Posterior cingulate gyrus (tissue), 11 donors: ENCODE measurements at regions of chr18 and their contacts with region 1.

Region 1: GRCh38 chr18:24271381-24272331 is 126.0 kb downstream of the OSBPL1A start:
- DNase-seq: peak; percentile 47 to 95 (median 68)

Region 2: GRCh38 chr18:24176727-24177416 is 94.8 kb before region 1 on chr18:
- intact Hi-C with region 1: loop called (anchors 2 kb)
- DNase-seq: peak in 8 of 10 donors; percentile 55 to 93 (median 82)

Region 3: GRCh38 chr18:24200494-24201290 is 71.0 kb before region 1 on chr18:
- intact Hi-C with region 1: loop called (anchors 5 kb)
- DNase-seq: no peak

Region 4: GRCh38 chr18:24231773-24232735 is 39.6 kb before region 1 on chr18:
- intact Hi-C with region 1: no loop called
- DNase-seq: no peak